AG04449 (cell line): ENCODE measurements at regions of chr1 and their contacts with region 1.

Region 1: GRCh38 chr1:93846211-93846991 is 32.6 kb downstream of the DNTTIP2 start:
- DNase-seq: no peak
- H3K4me3 ChIP-seq: peak overlapping the region; percentile 83
- CTCF ChIP-seq: peak; percentile 57

Region 2: DNA sequence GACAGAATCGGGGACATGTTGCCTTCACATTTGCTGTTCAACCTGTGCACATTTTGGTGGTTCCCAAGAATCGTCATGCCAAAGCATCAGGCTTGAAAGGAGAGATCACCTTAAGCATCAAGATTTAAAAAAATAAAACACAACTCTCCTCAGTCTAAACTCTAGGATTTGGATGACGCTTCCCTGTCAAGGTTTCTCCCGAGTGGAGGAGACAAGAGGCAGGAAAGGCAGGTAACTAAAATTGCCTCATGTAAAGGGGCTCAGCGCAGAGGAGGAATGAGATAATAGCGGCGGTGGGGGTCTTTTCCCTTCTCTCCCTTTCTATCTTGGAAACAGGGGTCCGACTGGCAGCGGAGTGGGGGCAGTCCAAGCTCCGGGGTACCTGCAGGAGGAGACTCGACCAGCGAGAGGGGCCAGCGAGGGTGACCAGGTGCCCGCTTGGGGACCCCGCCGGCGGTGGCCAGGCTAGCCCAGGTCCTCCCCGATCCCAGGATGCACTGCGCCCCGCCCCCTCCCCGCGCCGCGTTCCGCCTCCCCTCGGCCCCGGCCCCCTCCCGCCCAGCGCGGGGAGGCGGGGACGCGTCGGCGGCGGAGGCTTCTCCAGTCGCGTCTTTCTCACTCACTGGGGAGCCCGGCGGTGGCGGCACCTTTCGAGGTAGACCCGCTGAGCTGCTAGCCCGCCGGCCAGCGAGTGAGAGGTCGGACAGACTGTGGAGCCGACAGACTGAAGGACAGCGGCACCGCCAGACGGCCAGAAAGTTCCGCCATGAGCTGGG is 398.7 kb before region 1 on chr1 and contains the start of gene FNBP1L:
- CTCF ChIA-PET with region 1: interaction called, 10 read pairs
- POLR2A ChIA-PET with region 1: interaction called, 3 read pairs
- DNase-seq: no peak
- H3K4me3 ChIP-seq: peak within 1 kb of the TSS; percentile 84
- CTCF ChIP-seq: no peak

Region 3: GRCh38 chr1:93629099-93630059 is 217.0 kb before region 1 on chr1:
- CTCF ChIA-PET with region 1: interaction called, 279 read pairs
- POLR2A ChIA-PET with region 1: interaction called, 4 read pairs
- DNase-seq: no peak
- H3K4me3 ChIP-seq: no peak overlapping the region
- CTCF ChIP-seq: peak; percentile 70

Region 4: DNA sequence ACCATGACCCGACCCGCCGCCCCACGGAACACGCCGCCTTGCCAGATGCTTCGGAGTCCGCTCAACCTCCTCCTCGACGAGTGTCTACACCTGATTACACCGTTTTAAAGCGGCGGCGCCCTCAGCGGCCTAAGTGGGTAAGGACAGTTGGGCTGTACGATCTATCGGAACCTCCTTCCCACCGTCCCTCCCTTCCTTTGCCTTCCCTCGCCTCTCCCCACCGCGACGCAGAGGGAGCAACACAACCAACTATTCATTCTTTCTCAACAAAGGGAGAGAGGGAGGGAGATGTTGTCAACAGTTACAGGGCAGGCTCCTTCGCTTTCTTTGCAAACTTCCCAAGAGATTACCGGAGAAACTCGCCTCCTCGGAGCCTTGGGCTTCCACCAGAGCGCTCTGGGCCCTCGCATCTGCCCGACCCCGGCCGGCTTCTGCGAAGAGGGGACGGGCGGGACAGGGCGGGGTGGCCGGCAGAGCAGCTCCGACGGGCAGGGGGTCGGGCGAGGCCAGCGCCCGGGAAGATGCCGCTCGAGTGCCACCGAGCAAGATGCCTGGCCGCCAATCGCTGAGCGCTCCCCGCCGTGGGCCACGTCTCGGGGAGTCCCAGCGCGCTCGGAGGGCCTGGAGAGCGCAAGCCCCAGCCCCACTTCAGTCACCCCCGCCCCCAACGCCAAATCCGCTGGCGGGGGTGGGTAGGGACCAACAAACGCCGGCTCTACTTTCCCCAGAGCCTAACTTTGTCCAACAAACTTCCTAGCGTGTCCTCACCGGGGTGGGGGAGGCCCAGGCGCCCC is 165.4 kb before region 1 on chr1:
- CTCF ChIA-PET with region 1: interaction called, 27 read pairs
- POLR2A ChIA-PET with region 1: interaction called, 3 read pairs
- DNase-seq: no peak
- H3K4me3 ChIP-seq: peak overlapping the region; percentile 75
- CTCF ChIP-seq: peak; percentile 83

Region 5: DNA sequence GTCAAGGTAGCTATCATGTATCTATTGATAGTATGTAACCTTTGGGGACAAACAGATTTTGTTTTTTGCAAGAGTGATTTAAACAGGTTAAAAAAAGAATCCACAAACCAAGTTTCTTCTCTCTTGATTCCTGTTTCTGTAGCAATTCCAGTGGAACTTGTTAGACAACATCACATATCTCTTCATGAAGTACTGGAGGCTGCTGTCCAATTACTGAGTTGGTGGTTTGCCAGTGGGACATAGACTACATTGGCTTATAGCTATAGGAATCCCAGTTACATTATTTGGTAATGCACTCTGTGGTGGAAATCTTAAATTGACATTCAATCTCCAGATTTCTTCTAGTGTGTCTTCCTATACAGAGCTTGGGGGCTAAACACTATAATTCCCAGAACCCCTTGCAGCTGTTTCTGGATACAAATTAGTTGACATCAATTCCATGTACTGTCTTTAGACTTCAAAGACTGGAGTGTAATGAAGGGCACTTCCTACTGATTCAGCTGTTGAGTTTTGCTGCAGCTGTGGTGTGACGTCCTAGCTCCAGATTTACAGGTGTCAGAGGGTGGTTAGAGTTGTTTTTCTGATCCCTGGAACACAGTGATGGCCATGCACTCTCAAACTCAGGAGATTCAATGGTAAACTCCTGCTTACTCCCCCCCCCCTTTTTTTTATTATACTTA is 92.2 kb after region 1 on chr1:
- CTCF ChIA-PET with region 1: no interaction called
- POLR2A ChIA-PET with region 1: no interaction called
- DNase-seq: no peak
- H3K4me3 ChIP-seq: no peak overlapping the region
- CTCF ChIP-seq: no peak

Region 6: GRCh38 chr1:94095112-94095637 is 248.8 kb after region 1 on chr1:
- CTCF ChIA-PET with region 1: no interaction called
- POLR2A ChIA-PET with region 1: no interaction called
- DNase-seq: peak; percentile 63
- H3K4me3 ChIP-seq: no peak overlapping the region
- CTCF ChIP-seq: no peak